ENCODE measurements at regions of chr7 and their contacts with region 1.

Region 1: GRCh38 chr7:5629941-5630340 is 151.5 kb downstream of the RNF216 start:
- DNase-seq: peak; percentile 86
- H3K4me3 Mint-ChIP-seq: no peak overlapping the region
- H3K27ac Mint-ChIP-seq: peak overlapping the region; percentile 22
- H3K4me1 Mint-ChIP-seq: peaks cover 21% of the 10 kb centered on the region
- H3K27me3 Mint-ChIP-seq: no peaks in the 10 kb centered on the region
- CTCF ChIP-seq: no peak

Region 2: DNA sequence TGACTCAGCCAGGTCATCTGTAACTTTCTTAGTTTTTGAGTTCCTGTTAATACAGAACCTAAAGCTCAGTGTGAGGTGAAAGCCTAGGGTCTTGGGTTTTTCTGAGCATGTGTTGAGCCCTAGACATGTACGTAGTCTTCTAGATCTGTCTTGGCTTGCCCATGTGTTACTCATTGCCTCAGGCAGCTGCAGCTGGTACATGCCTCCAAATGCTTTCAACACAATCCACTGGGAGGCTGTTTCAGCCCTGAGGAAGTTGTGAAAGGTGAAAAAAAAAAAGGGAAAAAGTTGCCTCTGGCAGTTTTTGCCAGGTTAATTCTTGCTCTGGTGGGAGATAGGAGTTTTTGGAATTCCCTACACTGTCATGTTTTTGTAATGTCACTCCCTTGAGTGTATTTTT is 16.9 kb after region 1 on chr7:
- CTCF ChIA-PET with region 1: interaction called, 5 read pairs
- POLR2A ChIA-PET with region 1: interaction called, 50 read pairs
- intact Hi-C with region 1: no loop called
- DNase-seq: peak; percentile 95
- H3K4me3 Mint-ChIP-seq: peak overlapping the region; percentile 8
- H3K27ac Mint-ChIP-seq: peak overlapping the region; percentile 84
- H3K4me1 Mint-ChIP-seq: peaks cover 25% of the 10 kb centered on the region
- H3K27me3 Mint-ChIP-seq: no peaks in the 10 kb centered on the region
- CTCF ChIP-seq: no peak

Measured in MCF 10A (cell line).